Thyroid gland (tissue), 4 donors: ENCODE measurements at regions of chr20 and their contacts with region 1.

Region 1: DNA sequence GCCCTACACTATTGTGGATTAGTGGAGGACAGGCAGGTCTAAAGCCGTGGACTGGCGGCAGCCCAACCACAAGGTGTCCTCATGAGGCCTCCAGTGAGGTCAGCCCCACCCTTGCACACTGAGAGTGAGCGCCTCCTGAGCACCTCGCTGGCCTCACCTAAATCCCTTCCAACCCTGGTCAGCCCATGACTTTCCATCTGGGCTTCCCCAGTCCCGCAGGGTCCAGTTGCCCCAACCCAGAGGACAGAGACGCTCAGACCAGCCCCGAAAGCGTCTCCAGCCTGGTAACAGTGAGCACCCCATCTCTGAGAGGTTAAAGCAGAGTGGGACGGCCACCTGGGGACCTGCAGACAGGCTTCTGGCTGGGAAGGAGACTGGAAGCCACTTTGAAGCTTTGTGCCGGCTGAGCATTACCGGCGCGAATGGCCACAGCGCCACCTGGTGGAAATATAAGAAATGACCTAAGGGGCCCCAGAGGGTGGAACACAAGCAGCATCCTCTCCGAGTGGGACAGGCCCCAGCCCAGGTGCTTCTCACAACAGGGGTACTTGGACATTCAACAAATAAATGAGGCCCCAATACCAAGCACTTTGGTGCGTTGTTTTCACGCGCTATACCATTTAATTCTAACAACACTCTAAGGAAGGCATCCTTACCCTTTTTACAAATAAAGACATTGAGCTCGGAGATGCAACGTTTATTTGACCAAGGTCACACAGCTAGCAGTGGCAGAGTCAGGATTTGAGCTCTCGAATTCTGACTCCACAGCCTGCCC is 65.7 kb upstream of the TOP1 start:
- DNase-seq: peak; percentile 54 to 71
- H3K4me3 ChIP-seq: no peak overlapping the region
- H3K27ac ChIP-seq: no peak overlapping the region
- H3K4me1 ChIP-seq: peaks cover 0 to 5% of the 10 kb centered on the region in 2 donors
- H3K27me3 ChIP-seq: no peaks in the 10 kb centered on the region
- CTCF ChIP-seq: peak; percentile 74 to 89 (median 82)
- POLR2A ChIP-seq: no peak

Region 2: GRCh38 chr20:40160097-40160550 is 802.8 kb before region 1 on chr20:
- intact Hi-C with region 1: loop called (anchors 10 kb)
- DNase-seq: peak; percentile 46 to 55
- H3K4me3 ChIP-seq: no peak overlapping the region
- H3K27ac ChIP-seq: no peak overlapping the region
- H3K4me1 ChIP-seq: no peaks in the 10 kb centered on the region
- H3K27me3 ChIP-seq: no peaks in the 10 kb centered on the region
- CTCF ChIP-seq: peak; percentile 50 to 71 (median 62)
- POLR2A ChIP-seq: no peak

Region 3: GRCh38 chr20:40908309-40908708 is 54.6 kb before region 1 on chr20:
- intact Hi-C with region 1: no loop called
- DNase-seq: no peak
- H3K4me3 ChIP-seq: no peak overlapping the region
- H3K27ac ChIP-seq: no peak overlapping the region
- H3K4me1 ChIP-seq: no peaks in the 10 kb centered on the region
- H3K27me3 ChIP-seq: no peaks in the 10 kb centered on the region
- CTCF ChIP-seq: no peak
- POLR2A ChIP-seq: no peak

Region 4: DNA sequence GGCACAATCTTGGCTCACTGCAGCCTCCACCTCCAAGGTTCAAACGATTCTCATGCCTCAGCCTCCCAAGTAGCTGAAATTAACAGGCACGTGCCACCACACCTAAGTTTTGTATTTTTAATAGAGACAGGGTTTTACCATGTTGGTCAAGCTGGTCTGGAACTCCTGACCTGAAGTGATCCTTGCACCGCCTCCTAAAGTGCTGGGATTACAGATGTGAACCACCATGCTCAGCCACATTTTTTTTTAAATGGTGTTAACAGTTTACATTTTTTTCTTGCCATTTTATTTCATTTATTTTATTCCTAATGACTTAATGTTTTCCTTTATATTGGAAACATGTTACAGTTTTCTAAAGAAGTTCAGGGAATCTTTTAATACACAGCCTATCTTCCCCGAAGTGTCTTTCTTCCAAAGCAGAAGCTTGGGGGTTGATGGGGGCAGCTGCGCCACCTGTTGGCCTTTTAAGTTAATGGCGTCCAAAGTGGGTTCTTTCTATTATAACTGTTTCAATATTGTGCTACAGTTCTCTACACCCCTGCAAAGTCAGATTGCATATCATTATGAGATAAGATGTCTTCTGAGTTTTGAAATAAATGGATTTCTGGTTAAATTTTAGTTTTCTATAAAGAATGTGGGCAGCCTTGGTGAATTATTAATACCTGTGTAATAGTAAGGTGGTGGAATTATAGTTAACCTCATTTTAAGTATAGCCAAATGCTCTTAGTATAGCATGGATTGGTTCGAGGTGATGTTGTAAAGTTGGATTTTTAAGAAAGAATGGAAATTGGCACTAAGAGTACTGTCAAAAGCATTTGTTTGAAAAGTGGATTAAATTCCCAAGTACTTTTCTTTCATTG is 132.4 kb after region 1 on chr20:
- intact Hi-C with region 1: loop called (anchors 5 kb)
- DNase-seq: peak; percentile 57 to 65
- H3K4me3 ChIP-seq: no peak overlapping the region
- H3K27ac ChIP-seq: no peak overlapping the region
- H3K4me1 ChIP-seq: no peaks in the 10 kb centered on the region
- H3K27me3 ChIP-seq: no peaks in the 10 kb centered on the region
- CTCF ChIP-seq: peak; percentile 48 to 82 (median 76)
- POLR2A ChIP-seq: no peak